Activated CD4-positive, alpha-beta memory T cell treated with anti-CD3 and anti-CD28 coated beads, Interleukin-2, amount 10 ng/mL, durations not matched to agents 7 days and 5 days (primary cell): ENCODE measurements at regions of chr19 and their contacts with region 1.

Region 1: GRCh38 chr19:11558881-11559828 is at the start of gene ELOF1:
- DNase-seq: peak; percentile 97
- H3K4me3 Mint-ChIP-seq: peak within 1 kb of the TSS; percentile 95
- H3K27ac Mint-ChIP-seq: peak within 1 kb of the TSS; percentile 76
- H3K4me1 Mint-ChIP-seq: peaks cover 50% of the 10 kb centered on the region
- H3K27me3 Mint-ChIP-seq: no peaks in the 10 kb centered on the region
- total RNA-seq, gene ELOF1: 49.7 to 50.2 TPM

Region 2: GRCh38 chr19:11513946-11514345 is 45.2 kb before region 1 on chr19:
- CTCF ChIA-PET with region 1: no interaction called
- POLR2A ChIA-PET with region 1: no interaction called
- DNase-seq: no peak
- H3K4me3 Mint-ChIP-seq: no peak overlapping the region
- H3K27ac Mint-ChIP-seq: no peak overlapping the region
- H3K4me1 Mint-ChIP-seq: no peaks in the 10 kb centered on the region
- H3K27me3 Mint-ChIP-seq: no peaks in the 10 kb centered on the region

Region 3: GRCh38 chr19:11535792-11536595 is 23.2 kb before region 1 on chr19:
- CTCF ChIA-PET with region 1: interaction called, 20 read pairs
- POLR2A ChIA-PET with region 1: interaction called, 3 read pairs
- DNase-seq: peak; percentile 88
- H3K4me3 Mint-ChIP-seq: peak overlapping the region; percentile 24
- H3K27ac Mint-ChIP-seq: no peak overlapping the region
- H3K4me1 Mint-ChIP-seq: peaks cover 14% of the 10 kb centered on the region
- H3K27me3 Mint-ChIP-seq: peaks cover 20% of the 10 kb centered on the region

Region 4: GRCh38 chr19:11570039-11570462 is 10.9 kb after region 1 on chr19:
- CTCF ChIA-PET with region 1: interaction called, 13 read pairs
- POLR2A ChIA-PET with region 1: interaction called, 4 read pairs
- DNase-seq: no peak
- H3K4me3 Mint-ChIP-seq: no peak overlapping the region
- H3K27ac Mint-ChIP-seq: no peak overlapping the region
- H3K4me1 Mint-ChIP-seq: peaks cover 12% of the 10 kb centered on the region
- H3K27me3 Mint-ChIP-seq: no peaks in the 10 kb centered on the region

Region 5: DNA sequence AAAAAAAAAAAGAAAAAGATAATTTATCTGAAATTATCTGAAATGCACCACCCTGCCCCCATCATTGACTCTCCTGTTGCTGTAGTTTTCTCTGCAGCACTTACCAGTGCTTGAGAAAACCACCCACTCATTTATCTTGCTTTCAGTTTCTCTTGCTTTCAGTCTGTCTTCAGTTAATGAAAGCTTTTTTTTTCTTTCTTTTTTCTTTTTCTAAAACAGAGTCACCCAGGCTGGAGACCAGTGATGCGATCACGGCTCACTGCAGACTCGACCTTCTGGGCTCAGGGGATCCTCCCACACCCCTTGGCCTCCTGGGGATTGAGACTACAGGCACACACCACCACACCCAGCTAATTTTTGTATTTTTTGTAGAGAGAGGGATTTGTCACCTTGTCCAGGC is 22.6 kb after region 1 on chr19:
- CTCF ChIA-PET with region 1: interaction called, 11 read pairs
- POLR2A ChIA-PET with region 1: interaction called, 12 read pairs
- DNase-seq: peak; percentile 48
- H3K4me3 Mint-ChIP-seq: peak overlapping the region; percentile 60
- H3K27ac Mint-ChIP-seq: peak overlapping the region; percentile 79
- H3K4me1 Mint-ChIP-seq: peaks cover 27% of the 10 kb centered on the region
- H3K27me3 Mint-ChIP-seq: no peaks in the 10 kb centered on the region

Region 6: DNA sequence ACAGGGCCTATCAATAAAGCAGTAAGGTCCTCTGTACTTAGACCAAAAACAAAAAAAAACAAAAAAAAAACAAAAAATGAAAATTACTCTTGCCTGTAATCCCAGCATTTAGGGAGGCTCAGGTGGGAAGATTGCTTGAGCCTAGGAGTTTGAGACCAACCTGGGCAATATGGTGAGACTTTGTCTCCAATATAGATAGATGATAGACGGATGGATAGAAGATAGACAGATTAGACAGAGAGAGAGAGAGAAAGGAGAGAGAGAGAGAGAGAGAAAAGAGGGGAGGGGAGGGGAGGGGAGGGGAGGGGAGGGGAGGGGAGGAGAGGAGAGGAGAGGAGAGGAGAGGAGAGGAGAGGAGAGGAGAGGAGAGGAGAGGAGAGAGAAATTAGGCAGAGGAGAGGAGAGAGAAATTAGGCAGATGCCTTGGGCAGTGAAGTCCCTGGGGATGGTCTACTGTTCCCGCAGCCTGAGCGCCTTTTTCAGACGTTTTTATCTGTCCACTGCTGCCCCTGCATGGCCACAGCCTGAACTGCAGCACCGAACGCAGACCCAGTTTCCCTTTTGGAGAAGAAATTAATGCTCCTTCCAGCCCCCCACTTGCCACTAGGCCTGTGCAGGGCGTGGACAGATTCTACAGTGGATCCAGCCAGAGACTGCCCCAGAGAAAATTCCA is 28.3 kb after region 1 on chr19:
- CTCF ChIA-PET with region 1: interaction called, 7 read pairs
- POLR2A ChIA-PET with region 1: interaction called, 12 read pairs
- DNase-seq: peak; percentile 83
- H3K4me3 Mint-ChIP-seq: no peak overlapping the region
- H3K27ac Mint-ChIP-seq: no peak overlapping the region
- H3K4me1 Mint-ChIP-seq: peaks cover 10% of the 10 kb centered on the region
- H3K27me3 Mint-ChIP-seq: no peaks in the 10 kb centered on the region